ENCODE measurements at regions of chr13 and their contacts with region 1.

Region 1: GRCh38 chr13:44435142-44435982 is 61.7 kb downstream of the SERP2 start:
- DNase-seq: peak; percentile 95 to 99
- H3K4me3 ChIP-seq: peak overlapping the region; percentile 91
- H3K4me3 Mint-ChIP-seq: peak overlapping the region; percentile 93
- H3K27ac Mint-ChIP-seq: peak overlapping the region; percentile 98
- H3K4me1 ChIP-seq: peaks cover 50% of the 10 kb centered on the region
- H3K4me1 Mint-ChIP-seq: peaks cover 48% of the 10 kb centered on the region
- H3K27me3 ChIP-seq: no peaks in the 10 kb centered on the region
- H3K27me3 Mint-ChIP-seq: no peaks in the 10 kb centered on the region
- CTCF ChIP-seq: no peak

Region 2: DNA sequence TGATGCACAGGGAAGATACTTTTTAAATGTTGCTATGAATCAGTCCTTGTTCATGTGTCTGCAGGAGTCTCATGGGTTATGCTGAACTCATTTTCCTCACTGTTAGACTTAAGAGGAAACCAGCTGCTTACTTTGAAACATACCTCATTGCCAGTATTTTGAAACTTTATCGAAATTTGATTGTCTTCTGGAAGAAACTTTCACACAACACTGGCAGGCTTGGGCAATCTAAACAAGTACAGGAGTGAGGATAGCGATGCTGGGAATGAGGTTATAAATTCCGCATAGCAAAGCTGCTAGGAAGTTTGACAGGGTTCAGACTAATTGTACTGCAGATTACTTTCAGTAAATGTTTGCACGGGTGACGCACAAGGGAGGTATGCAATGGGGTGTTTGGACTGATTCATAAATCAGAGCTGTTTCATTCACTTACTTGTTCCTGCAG is 1166.3 kb before region 1 on chr13:
- CTCF ChIA-PET with region 1: no interaction called
- POLR2A ChIA-PET with region 1: interaction called, 13 read pairs
- intact Hi-C with region 1: no loop called
- DNase-seq: peak; percentile 86 to 90
- H3K4me3 ChIP-seq: no peak overlapping the region
- H3K4me3 Mint-ChIP-seq: peak overlapping the region; percentile 42
- H3K27ac Mint-ChIP-seq: peak overlapping the region; percentile 67
- H3K4me1 ChIP-seq: peaks cover 36% of the 10 kb centered on the region
- H3K4me1 Mint-ChIP-seq: peaks cover 29% of the 10 kb centered on the region
- H3K27me3 ChIP-seq: no peaks in the 10 kb centered on the region
- H3K27me3 Mint-ChIP-seq: no peaks in the 10 kb centered on the region
- CTCF ChIP-seq: no peak

Region 3: GRCh38 chr13:44050450-44051063 is 384.8 kb before region 1 on chr13:
- CTCF ChIA-PET with region 1: interaction called, 9 read pairs
- POLR2A ChIA-PET with region 1: interaction called, 15 read pairs
- intact Hi-C with region 1: loop called (anchors 1 kb)
- DNase-seq: peak in 1 of 2 experiments; percentile 43
- H3K4me3 ChIP-seq: no peak overlapping the region
- H3K4me3 Mint-ChIP-seq: no peak overlapping the region
- H3K27ac Mint-ChIP-seq: no peak overlapping the region
- H3K4me1 ChIP-seq: peaks cover 42% of the 10 kb centered on the region
- H3K4me1 Mint-ChIP-seq: peaks cover 36% of the 10 kb centered on the region
- H3K27me3 ChIP-seq: no peaks in the 10 kb centered on the region
- H3K27me3 Mint-ChIP-seq: no peaks in the 10 kb centered on the region
- CTCF ChIP-seq: peak; percentile 70 to 78

Region 4: GRCh38 chr13:44191504-44192171 is 243.7 kb before region 1 on chr13:
- CTCF ChIA-PET with region 1: no interaction called
- POLR2A ChIA-PET with region 1: interaction called, 3 read pairs
- intact Hi-C with region 1: loop called (anchors 2 kb)
- DNase-seq: peak; percentile 62 to 63
- H3K4me3 ChIP-seq: no peak overlapping the region
- H3K4me3 Mint-ChIP-seq: no peak overlapping the region
- H3K27ac Mint-ChIP-seq: peak overlapping the region; percentile 36
- H3K4me1 ChIP-seq: peaks cover 6% of the 10 kb centered on the region; the same call in 1 of the 2 replicates
- H3K4me1 Mint-ChIP-seq: peaks cover 37% of the 10 kb centered on the region
- H3K27me3 ChIP-seq: no peaks in the 10 kb centered on the region
- H3K27me3 Mint-ChIP-seq: no peaks in the 10 kb centered on the region
- CTCF ChIP-seq: peak; percentile 47 to 57

Region 5: GRCh38 chr13:44280456-44280855 is 154.9 kb before region 1 on chr13:
- CTCF ChIA-PET with region 1: interaction called, 9 read pairs
- POLR2A ChIA-PET with region 1: interaction called, 7 read pairs
- intact Hi-C with region 1: loop called (anchors 1 kb)
- DNase-seq: no peak
- H3K4me3 ChIP-seq: no peak overlapping the region
- H3K4me3 Mint-ChIP-seq: no peak overlapping the region
- H3K27ac Mint-ChIP-seq: peak overlapping the region; percentile 86
- H3K4me1 ChIP-seq: peaks cover 52% of the 10 kb centered on the region
- H3K4me1 Mint-ChIP-seq: peaks cover 39% of the 10 kb centered on the region
- H3K27me3 ChIP-seq: no peaks in the 10 kb centered on the region
- H3K27me3 Mint-ChIP-seq: no peaks in the 10 kb centered on the region
- CTCF ChIP-seq: no peak

Region 6: GRCh38 chr13:44380404-44381165 is 54.8 kb before region 1 on chr13:
- CTCF ChIA-PET with region 1: no interaction called
- POLR2A ChIA-PET with region 1: interaction called, 10 read pairs
- intact Hi-C with region 1: no loop called
- DNase-seq: no peak
- H3K4me3 ChIP-seq: no peak overlapping the region
- H3K4me3 Mint-ChIP-seq: no peak overlapping the region
- H3K27ac Mint-ChIP-seq: peak overlapping the region; percentile 85
- H3K4me1 ChIP-seq: peaks cover 62% of the 10 kb centered on the region
- H3K4me1 Mint-ChIP-seq: peaks cover 40% of the 10 kb centered on the region
- H3K27me3 ChIP-seq: no peaks in the 10 kb centered on the region
- H3K27me3 Mint-ChIP-seq: no peaks in the 10 kb centered on the region
- CTCF ChIP-seq: no peak

Region 7: DNA sequence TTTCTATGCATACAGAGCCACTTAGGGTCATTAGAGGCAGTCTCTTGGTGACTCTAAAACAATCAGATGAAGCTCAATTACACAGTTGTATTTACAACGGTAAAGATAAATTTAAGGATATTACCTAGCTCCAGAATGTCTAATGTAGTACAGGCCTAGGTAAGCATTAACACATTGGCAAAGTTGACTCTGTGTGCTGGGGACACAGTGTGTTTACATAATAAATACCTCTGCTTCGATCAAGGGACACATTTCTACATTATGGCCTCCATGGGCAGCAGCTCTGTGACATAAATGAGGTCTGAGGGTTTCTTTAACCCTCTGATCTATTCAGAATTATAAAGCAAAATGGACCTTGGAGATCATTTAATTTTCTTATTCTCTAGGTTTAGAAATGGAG is 13.0 kb after region 1 on chr13:
- CTCF ChIA-PET with region 1: interaction called, 5 read pairs
- POLR2A ChIA-PET with region 1: interaction called, 19 read pairs
- intact Hi-C with region 1: no loop called
- DNase-seq: no peak
- H3K4me3 ChIP-seq: no peak overlapping the region
- H3K4me3 Mint-ChIP-seq: no peak overlapping the region
- H3K27ac Mint-ChIP-seq: peak overlapping the region; percentile 89
- H3K4me1 ChIP-seq: peaks cover 26% of the 10 kb centered on the region
- H3K4me1 Mint-ChIP-seq: peaks cover 24% of the 10 kb centered on the region
- H3K27me3 ChIP-seq: no peaks in the 10 kb centered on the region
- H3K27me3 Mint-ChIP-seq: no peaks in the 10 kb centered on the region
- CTCF ChIP-seq: no peak

Region 8: DNA sequence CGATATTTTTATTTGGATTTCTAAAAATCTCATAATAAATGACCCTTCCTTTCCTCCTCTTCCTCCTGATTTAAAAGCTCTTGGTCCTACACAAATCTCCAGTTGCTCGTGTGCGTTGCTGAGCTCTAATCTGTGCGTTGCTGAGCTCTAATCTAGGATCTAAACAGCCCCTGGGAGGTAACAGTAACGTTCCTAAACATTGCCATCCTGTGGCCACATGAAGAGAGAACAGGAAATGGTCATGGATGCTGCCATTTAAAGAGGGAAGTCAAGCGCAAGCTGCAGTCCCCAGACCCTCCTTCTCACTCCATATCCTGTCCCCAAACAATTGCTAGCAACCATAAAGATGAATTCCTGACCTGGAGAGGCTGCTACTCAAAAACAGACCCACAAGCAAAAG is 383.1 kb after region 1 on chr13:
- CTCF ChIA-PET with region 1: no interaction called
- POLR2A ChIA-PET with region 1: no interaction called
- intact Hi-C with region 1: no loop called
- DNase-seq: peak; percentile 50 to 56
- H3K4me3 ChIP-seq: no peak overlapping the region
- H3K4me3 Mint-ChIP-seq: no peak overlapping the region
- H3K27ac Mint-ChIP-seq: peak overlapping the region; percentile 76
- H3K4me1 ChIP-seq: peaks cover 62% of the 10 kb centered on the region
- H3K4me1 Mint-ChIP-seq: peaks cover 52% of the 10 kb centered on the region
- H3K27me3 ChIP-seq: no peaks in the 10 kb centered on the region
- H3K27me3 Mint-ChIP-seq: no peaks in the 10 kb centered on the region
- CTCF ChIP-seq: peak in 1 of 2 experiments; percentile 37

Measured in Caco-2 (cell line).